Lower leg skin (tissue), 4 donors: ENCODE measurements at regions of chr15 and their contacts with region 1.

Region 1: DNA sequence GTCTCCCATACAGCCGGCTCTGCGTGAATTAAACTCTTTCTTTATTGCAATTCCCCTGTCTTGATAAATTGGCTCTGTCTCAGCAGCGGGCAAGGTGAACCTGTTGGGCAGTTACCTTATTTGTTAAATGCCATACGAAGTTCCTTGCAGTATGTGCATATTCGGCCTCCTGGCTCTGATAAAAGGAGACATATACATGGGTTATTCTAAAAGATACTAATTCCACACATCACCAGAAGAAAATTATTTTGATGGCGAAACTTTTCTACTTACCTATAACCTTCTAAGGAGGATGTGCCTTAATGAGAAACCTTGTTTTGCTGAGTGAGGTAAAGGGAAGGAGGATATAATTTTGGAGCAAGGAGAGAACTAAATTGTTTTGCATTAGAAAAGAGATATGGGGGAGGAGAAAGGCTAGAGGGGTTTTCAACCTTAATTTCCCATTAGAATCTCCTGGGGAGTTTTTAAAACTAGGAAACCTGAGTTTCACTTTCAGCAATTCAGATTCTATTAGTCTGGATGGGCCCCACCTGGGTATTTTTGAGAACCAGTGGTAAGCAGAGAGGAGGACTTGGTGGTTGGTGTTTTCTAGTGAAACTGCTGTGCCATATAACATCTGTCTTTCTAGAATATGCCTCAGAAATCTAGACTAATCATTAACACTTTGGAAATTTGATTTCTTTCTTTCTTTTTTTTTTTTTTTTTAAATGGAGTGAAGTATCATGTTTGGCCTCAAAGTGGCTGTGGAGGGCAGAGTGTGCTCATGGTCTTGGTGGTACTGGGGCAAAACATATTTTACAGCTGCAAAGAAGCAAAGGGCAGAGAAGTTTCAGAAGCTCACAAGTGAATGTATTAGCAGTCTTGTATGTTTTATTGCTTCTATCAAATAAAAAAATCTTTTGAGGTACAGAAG is 23.0 kb downstream of the NANOGP8 start:
- DNase-seq: no peak
- H3K4me3 ChIP-seq: no peak overlapping the region
- CTCF ChIP-seq: no peak
- POLR2A ChIP-seq: no peak

Region 2: GRCh38 chr15:33959844-33960548 is 1102.1 kb before region 1 on chr15:
- intact Hi-C with region 1: loop called (anchors 5 kb)
- DNase-seq: no peak
- H3K4me3 ChIP-seq: no peak overlapping the region
- CTCF ChIP-seq: no peak
- POLR2A ChIP-seq: no peak

Region 3: DNA sequence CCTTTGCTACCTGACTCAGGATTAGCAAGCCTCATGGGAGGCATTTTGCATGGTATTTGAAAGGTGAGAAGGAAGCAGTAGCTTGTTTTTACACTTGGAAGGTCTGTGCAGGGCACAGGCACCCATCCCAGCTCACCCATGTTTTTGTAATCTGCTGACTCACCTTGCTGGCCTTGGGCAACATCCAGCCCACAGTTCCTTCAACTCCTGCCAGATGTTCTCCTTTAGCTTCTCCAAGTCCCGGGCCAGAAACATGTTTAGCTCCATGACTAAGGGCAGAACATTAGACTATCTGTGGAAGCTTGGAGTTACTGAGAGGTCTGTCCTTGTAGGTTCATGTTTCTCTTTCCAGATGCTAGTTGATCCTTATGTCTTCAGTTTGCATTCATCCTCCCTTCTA is 61.6 kb before region 1 on chr15:
- intact Hi-C with region 1: no loop called
- DNase-seq: peak in 1 of 2 donors; percentile 57
- H3K4me3 ChIP-seq: no peak overlapping the region
- CTCF ChIP-seq: no peak
- POLR2A ChIP-seq: no peak